ENCODE measurements at regions of chr7 and their contacts with region 1.

Region 1: DNA sequence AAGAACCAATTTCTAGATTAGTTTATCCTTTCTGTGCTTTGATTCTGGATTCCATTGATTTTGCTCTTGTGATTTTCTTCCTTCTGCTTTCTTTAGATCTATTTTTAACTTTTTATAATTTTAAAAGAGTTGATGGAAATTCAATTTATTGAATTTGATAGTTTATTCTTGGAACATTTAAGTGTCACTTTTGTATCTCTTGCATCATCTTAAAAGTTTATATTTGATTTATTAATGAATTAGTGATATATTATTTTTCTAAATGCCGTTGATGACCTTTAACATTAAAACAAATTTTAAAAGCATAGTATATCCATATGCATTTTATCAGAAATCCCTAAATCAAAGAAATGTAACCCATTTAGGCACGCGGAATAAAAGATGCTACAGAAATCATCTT is 26.9 kb downstream of the DMTF1 start:
- DNase-seq: no peak
- ATAC-seq: no peak
- H3K4me3 ChIP-seq: no peak overlapping the region
- H3K27ac ChIP-seq: no peak overlapping the region
- H3K4me1 ChIP-seq: no peaks in the 10 kb centered on the region
- H3K27me3 ChIP-seq: no peaks in the 10 kb centered on the region
- CTCF ChIP-seq: no peak
- POLR2A ChIP-seq: no peak
- RAD21 ChIP-seq: no peak

Region 2: GRCh38 chr7:86448856-86449255 is 730.3 kb before region 1 on chr7:
- CTCF ChIA-PET with region 1: no interaction called
- POLR2A ChIA-PET with region 1: no interaction called
- dilution Hi-C with region 1: no loop called
- in situ Hi-C with region 1: no loop called
- intact Hi-C with region 1: no loop called
- DNase-seq: no peak
- ATAC-seq: no peak
- H3K4me3 ChIP-seq: no peak overlapping the region
- H3K27ac ChIP-seq: no peak overlapping the region
- H3K4me1 ChIP-seq: no peaks in the 10 kb centered on the region
- H3K27me3 ChIP-seq: no peaks in the 10 kb centered on the region
- CTCF ChIP-seq: no peak
- POLR2A ChIP-seq: no peak
- RAD21 ChIP-seq: no peak

Region 3: GRCh38 chr7:87164433-87164832 is 14.7 kb before region 1 on chr7:
- CTCF ChIA-PET with region 1: interaction called, 3 read pairs
- POLR2A ChIA-PET with region 1: no interaction called
- dilution Hi-C with region 1: no loop called
- in situ Hi-C with region 1: no loop called
- intact Hi-C with region 1: loop called (anchors 2 kb)
- DNase-seq: no peak
- ATAC-seq: no peak
- H3K4me3 ChIP-seq: no peak overlapping the region
- H3K27ac ChIP-seq: no peak overlapping the region
- H3K4me1 ChIP-seq: no peaks in the 10 kb centered on the region
- H3K27me3 ChIP-seq: no peaks in the 10 kb centered on the region
- CTCF ChIP-seq: no peak
- POLR2A ChIP-seq: no peak
- RAD21 ChIP-seq: no peak